Activated CD4-positive, alpha-beta T cell treated with anti-CD3 and anti-CD28 coated beads, Interleukin-2, amount 10 ng/mL, durations not matched to agents 24 days and 14 days (primary cell): ENCODE measurements at regions of chr4 and their contacts with region 1.

Region 1: GRCh38 chr4:163544407-163545038 is 50.0 kb downstream of the TMA16 start:
- DNase-seq: peak; percentile 88
- H3K4me3 Mint-ChIP-seq: no peak overlapping the region
- H3K27ac Mint-ChIP-seq: no peak overlapping the region
- H3K4me1 Mint-ChIP-seq: peaks cover 4% of the 10 kb centered on the region
- H3K27me3 Mint-ChIP-seq: no peaks in the 10 kb centered on the region

Region 2: GRCh38 chr4:163107754-163108153 is 436.8 kb before region 1 on chr4:
- intact Hi-C with region 1: loop called (anchors 5 kb)
- DNase-seq: peak; percentile 76
- H3K4me3 Mint-ChIP-seq: no peak overlapping the region
- H3K27ac Mint-ChIP-seq: no peak overlapping the region
- H3K4me1 Mint-ChIP-seq: peaks cover 23% of the 10 kb centered on the region
- H3K27me3 Mint-ChIP-seq: no peaks in the 10 kb centered on the region

Region 3: DNA sequence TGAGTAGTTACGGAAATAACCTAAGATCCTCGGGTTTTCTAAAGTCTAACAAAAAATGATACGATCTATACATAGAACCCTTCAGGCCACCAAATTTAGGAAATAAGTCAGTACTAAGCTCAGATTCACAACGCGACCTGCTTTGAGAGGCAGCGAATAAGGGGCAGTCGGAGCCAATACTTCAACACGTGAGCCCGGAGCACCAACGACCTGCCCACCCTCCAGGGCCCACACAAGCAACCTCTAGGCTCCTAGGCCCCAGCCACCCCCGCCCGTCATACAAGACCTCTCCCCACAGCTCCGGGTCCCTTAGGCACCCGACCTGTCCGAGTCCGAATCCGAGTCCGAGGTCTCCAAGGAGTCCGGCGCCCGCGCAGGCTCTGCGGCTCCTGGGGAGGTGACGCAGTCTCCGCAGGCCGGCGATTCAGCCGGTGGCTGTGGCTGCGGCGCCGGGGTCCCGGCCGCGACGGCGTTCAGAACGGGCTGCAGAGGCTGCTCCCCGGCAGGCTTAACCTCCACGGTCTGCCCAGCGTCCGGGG is 378.4 kb before region 1 on chr4:
- intact Hi-C with region 1: loop called (anchors 1 kb)
- DNase-seq: peak; percentile 87
- H3K4me3 Mint-ChIP-seq: peak overlapping the region; percentile 84
- H3K27ac Mint-ChIP-seq: peak overlapping the region; percentile 97
- H3K4me1 Mint-ChIP-seq: peaks cover 41% of the 10 kb centered on the region
- H3K27me3 Mint-ChIP-seq: no peaks in the 10 kb centered on the region

Region 4: GRCh38 chr4:163484906-163485305 is 59.6 kb before region 1 on chr4:
- intact Hi-C with region 1: loop called (anchors 1 kb)
- DNase-seq: peak; percentile 87
- H3K4me3 Mint-ChIP-seq: no peak overlapping the region
- H3K27ac Mint-ChIP-seq: no peak overlapping the region
- H3K4me1 Mint-ChIP-seq: peaks cover 4% of the 10 kb centered on the region
- H3K27me3 Mint-ChIP-seq: peaks cover 28% of the 10 kb centered on the region

Region 5: GRCh38 chr4:164109517-164109916 is 565.0 kb after region 1 on chr4:
- intact Hi-C with region 1: no loop called
- DNase-seq: no peak
- H3K4me3 Mint-ChIP-seq: no peak overlapping the region
- H3K27ac Mint-ChIP-seq: no peak overlapping the region
- H3K4me1 Mint-ChIP-seq: no peaks in the 10 kb centered on the region
- H3K27me3 Mint-ChIP-seq: no peaks in the 10 kb centered on the region